GM10248 (cell line): ENCODE measurements at regions of chr2 and their contacts with region 1.

Region 1: DNA sequence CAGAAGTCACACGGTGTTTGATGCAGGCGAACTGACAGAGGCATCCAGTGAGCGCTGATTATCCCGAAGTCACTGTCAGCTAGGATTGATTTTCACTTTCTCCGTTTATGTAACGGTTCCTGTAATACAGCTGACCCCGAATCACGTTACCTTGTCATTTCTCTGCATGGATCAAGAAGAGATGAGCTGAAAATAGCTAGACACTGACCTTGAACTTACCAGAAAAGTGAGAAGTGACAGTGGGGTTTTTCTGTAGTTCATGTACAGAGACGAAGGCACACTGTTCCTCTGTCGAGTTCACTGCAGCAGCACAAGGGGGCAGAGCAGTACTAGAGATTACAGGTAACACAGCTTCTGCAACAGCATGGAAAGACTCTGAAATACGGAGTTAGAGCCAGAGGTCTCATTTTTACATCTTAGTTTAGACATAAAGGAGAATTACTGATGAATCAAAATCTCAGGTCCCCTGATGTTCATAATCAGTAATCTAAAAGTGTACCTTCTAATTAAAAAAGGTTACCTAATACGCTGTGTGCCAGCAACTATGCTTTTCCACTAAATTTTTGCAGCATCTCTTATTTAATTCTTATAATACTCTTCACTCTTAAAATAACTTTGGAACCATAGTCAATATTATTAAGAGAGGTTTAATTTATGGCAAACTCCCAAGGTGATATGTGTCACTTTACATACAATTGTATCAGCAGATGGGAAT is 33.1 kb downstream of the ARHGAP15 start:
- DNase-seq: no peak
- CTCF ChIP-seq: peak; percentile 73

Region 2: GRCh38 chr2:143001501-143001900 is 160.8 kb before region 1 on chr2:
- CTCF ChIA-PET with region 1: no interaction called
- POLR2A ChIA-PET with region 1: no interaction called
- DNase-seq: no peak
- CTCF ChIP-seq: no peak

Region 3: DNA sequence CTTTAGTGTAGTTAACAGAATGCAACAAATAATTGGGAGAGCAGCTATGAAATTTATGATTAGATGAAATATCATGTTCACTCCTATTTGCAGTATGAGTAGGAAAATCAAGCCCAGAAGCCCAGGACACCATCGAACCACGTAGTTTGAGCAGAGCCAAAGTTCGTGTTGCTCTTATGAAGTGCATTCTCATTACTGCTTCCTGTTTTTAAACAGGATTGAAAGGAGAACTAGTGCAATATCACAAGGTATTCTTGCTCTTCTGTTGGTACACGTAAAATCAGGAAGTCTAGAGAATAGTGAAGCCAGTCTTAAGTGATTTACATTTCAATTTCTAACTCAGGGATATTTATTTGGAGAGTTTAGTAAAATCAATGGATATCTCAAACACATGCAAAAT is 12.0 kb before region 1 on chr2:
- CTCF ChIA-PET with region 1: interaction called, 12 read pairs
- POLR2A ChIA-PET with region 1: no interaction called
- DNase-seq: no peak
- CTCF ChIP-seq: no peak

Region 4: GRCh38 chr2:143183804-143184463 is 21.7 kb after region 1 on chr2:
- CTCF ChIA-PET with region 1: interaction called, 16 read pairs
- POLR2A ChIA-PET with region 1: no interaction called
- DNase-seq: peak; percentile 37
- CTCF ChIP-seq: no peak

Region 5: GRCh38 chr2:143217512-143218115 is 55.3 kb after region 1 on chr2:
- CTCF ChIA-PET with region 1: interaction called, 37 read pairs
- POLR2A ChIA-PET with region 1: no interaction called
- DNase-seq: no peak
- CTCF ChIP-seq: no peak

Region 6: GRCh38 chr2:143259368-143259958 is 97.2 kb after region 1 on chr2:
- CTCF ChIA-PET with region 1: interaction called, 22 read pairs
- POLR2A ChIA-PET with region 1: no interaction called
- DNase-seq: peak; percentile 13
- CTCF ChIP-seq: peak; percentile 67